BJ (cell line): ENCODE measurements at regions of chr2 and their contacts with region 1.

Region 1: GRCh38 chr2:237165405-237166276 is 80.0 kb downstream of the COPS8 start:
- DNase-seq: no peak
- H3K4me3 ChIP-seq: no peak overlapping the region
- H3K27me3 ChIP-seq: no peaks in the 10 kb centered on the region
- CTCF ChIP-seq: peak; percentile 72

Region 2: GRCh38 chr2:237025112-237025809 is 140.4 kb before region 1 on chr2:
- CTCF ChIA-PET with region 1: no interaction called
- POLR2A ChIA-PET with region 1: no interaction called
- DNase-seq: peak; percentile 67
- H3K4me3 ChIP-seq: no peak overlapping the region
- H3K27me3 ChIP-seq: no peaks in the 10 kb centered on the region; the same call in 1 of the 2 replicates
- CTCF ChIP-seq: no peak

Region 3: GRCh38 chr2:237060534-237061312 is 104.9 kb before region 1 on chr2:
- CTCF ChIA-PET with region 1: no interaction called
- POLR2A ChIA-PET with region 1: no interaction called
- DNase-seq: peak; percentile 5
- H3K4me3 ChIP-seq: no peak overlapping the region
- H3K27me3 ChIP-seq: no peaks in the 10 kb centered on the region; the same call in 1 of the 2 replicates
- CTCF ChIP-seq: peak; percentile 72

Region 4: DNA sequence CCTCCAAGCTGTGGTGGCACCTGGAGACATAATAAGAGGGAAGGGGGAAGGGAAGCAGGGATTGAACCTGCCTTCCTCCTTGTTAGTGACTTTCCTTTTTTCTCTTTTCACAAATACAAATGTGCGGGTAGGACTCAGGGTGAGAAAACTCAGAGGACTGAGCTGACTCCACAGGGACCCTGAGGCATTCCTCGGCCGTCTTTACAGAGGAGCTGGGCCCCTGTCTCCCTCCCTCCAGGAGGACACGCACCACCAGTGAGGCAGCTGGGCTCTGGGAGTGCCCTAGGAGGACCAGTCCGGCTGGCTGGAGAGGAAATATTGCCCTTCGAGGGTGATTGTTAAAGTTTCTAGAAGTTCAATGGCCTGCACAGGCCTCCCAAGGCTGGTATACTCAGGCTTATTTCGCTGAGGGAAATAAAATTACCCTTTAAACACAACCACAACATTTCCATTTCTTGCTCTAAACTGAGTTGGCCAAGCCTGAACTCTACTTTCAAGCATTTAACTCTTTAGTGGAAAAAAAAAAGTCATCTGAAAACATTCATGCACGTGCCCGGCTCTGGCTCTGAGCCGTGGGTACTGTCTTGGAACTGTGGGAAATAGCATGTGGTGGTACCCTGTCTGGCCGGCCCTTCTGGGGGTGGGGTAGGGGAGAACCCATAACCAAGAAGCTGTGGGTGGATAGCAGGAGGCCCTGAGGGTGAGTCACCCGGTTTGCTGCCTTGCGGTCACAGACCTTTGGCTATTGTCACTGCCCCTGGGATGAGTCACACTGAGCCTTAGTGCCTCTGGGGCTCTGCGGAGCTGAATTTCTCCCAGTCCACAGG is 36.0 kb after region 1 on chr2:
- CTCF ChIA-PET with region 1: interaction called, 11 read pairs
- POLR2A ChIA-PET with region 1: no interaction called
- DNase-seq: no peak
- H3K4me3 ChIP-seq: no peak overlapping the region
- H3K27me3 ChIP-seq: no peaks in the 10 kb centered on the region
- CTCF ChIP-seq: no peak

Region 5: GRCh38 chr2:237256887-237257286 is 91.2 kb after region 1 on chr2:
- CTCF ChIA-PET with region 1: interaction called, 12 read pairs
- POLR2A ChIA-PET with region 1: interaction called, 3 read pairs
- DNase-seq: peak; percentile 65
- H3K4me3 ChIP-seq: no peak overlapping the region
- H3K27me3 ChIP-seq: no peaks in the 10 kb centered on the region
- CTCF ChIP-seq: no peak

Region 6: DNA sequence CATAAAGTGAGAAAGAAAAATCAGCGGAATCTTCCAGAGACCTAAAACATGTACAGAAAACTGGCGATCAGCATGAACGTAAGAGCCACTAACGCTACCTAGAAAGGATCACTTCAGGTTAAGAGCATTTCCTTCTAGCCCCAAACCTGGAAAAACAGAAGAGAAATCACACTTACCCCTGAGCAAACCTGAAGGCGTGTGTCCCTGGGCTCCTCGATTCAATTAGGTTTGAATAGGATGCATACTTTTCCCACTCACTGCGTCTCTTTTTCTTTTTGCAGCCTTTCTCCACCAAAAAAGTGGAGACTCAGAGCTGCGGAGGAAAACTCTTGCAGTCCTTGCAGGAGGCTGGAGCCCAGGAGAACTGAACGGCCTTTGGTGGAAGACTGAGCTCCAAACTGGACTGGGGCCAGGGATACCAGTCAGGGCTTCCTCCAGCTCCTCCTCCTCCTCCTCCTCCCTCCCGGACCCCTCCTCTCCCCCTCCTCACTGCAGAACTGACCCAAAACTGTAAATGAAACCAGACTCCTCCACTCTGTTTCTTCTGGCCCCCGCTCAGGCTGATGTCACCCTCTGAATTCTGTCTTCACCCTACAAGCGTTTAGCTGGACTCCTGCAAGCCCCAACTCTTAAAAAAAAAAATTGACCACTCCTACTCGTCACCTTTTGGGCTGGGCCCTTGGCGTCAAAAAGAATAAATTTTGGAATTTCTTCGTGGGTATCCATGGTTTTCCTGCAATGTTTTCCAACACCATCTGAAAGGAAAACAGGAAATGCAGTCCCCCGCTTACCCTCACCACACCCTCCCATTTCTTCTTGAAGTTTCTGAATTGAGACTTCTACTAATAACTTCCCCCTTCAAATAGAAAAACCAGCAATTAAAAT is 248.4 kb after region 1 on chr2 and contains the start of gene COL6A3:
- CTCF ChIA-PET with region 1: interaction called, 44 read pairs
- POLR2A ChIA-PET with region 1: no interaction called
- DNase-seq: peak; percentile 97
- H3K4me3 ChIP-seq: peak within 1 kb of the TSS; percentile 94
- H3K27me3 ChIP-seq: no peaks in the 10 kb centered on the region
- CTCF ChIP-seq: no peak
- polyA plus RNA-seq, gene COL6A3: 522 and 695 TPM in 2 replicates